Colonic mucosa (tissue), 4 donors: ENCODE measurements at regions of chr13 and their contacts with region 1.

Region 1: GRCh38 chr13:44437356-44438233 is 64.0 kb downstream of the SERP2 start:
- DNase-seq: no peak
- H3K4me3 ChIP-seq: peak overlapping the region; percentile 59
- H3K27ac ChIP-seq: peak overlapping the region; percentile 94
- H3K4me1 ChIP-seq: peaks cover 3% of the 10 kb centered on the region
- H3K27me3 ChIP-seq: no peaks in the 10 kb centered on the region
- CTCF ChIP-seq: peak; percentile 58

Region 2: GRCh38 chr13:44050450-44051063 is 387.0 kb before region 1 on chr13:
- intact Hi-C with region 1: loop called (anchors 2 kb)
- DNase-seq: no peak
- H3K4me3 ChIP-seq: no peak overlapping the region
- H3K27ac ChIP-seq: peak overlapping the region; percentile 42
- H3K4me1 ChIP-seq: peaks cover 6% of the 10 kb centered on the region
- H3K27me3 ChIP-seq: no peaks in the 10 kb centered on the region
- CTCF ChIP-seq: peak; percentile 92